Activated T-helper 2 cell treated with anti-CD3 and anti-CD28 coated beads, Interferon-gamma antibody, Interleukin-2, Interleukin-4, amounts not matched to agents 10 μg/mL and 5 μg/mL and 100 μg/mL, durations not matched to agents 14 hours and 24 hours and 36 hours (primary cell): ENCODE measurements at regions of chr2 and their contacts with region 1.

Region 1: GRCh38 chr2:197869501-197870111 is 65.2 kb downstream of the PLCL1 start:
- DNase-seq: peak; percentile 38
- H3K4me3 Mint-ChIP-seq: peak overlapping the region; percentile 54
- H3K27ac Mint-ChIP-seq: peak overlapping the region; percentile 84
- H3K4me1 Mint-ChIP-seq: peaks cover 51% of the 10 kb centered on the region
- H3K27me3 Mint-ChIP-seq: no peaks in the 10 kb centered on the region

Region 2: GRCh38 chr2:197502201-197502600 is 367.4 kb before region 1 on chr2:
- intact Hi-C with region 1: no loop called
- DNase-seq: no peak
- H3K4me3 Mint-ChIP-seq: peak overlapping the region; percentile 94
- H3K27ac Mint-ChIP-seq: peak overlapping the region; percentile 9
- H3K4me1 Mint-ChIP-seq: peaks cover 25% of the 10 kb centered on the region
- H3K27me3 Mint-ChIP-seq: no peaks in the 10 kb centered on the region

Region 3: DNA sequence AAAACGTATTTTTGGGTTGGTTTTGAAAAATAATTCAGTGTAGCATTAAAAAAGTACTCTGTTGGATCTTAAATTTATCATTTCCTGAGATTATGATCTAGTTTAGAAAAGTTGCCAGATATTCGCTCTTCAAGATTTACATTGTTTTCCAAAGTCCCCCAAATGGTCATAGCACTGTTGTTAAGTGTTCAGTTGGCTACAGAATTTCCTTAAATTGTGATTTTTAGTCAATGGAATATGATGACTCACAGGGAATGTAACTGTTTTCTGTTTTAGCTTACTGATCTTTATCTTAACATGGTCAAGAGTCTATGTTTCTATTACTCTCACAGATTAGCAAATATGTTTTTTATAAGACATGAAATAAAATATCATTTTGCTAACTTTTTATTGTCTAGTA is 42.0 kb before region 1 on chr2:
- intact Hi-C with region 1: no loop called
- DNase-seq: no peak
- H3K4me3 Mint-ChIP-seq: no peak overlapping the region
- H3K27ac Mint-ChIP-seq: no peak overlapping the region
- H3K4me1 Mint-ChIP-seq: peaks cover 3% of the 10 kb centered on the region
- H3K27me3 Mint-ChIP-seq: no peaks in the 10 kb centered on the region

Region 4: DNA sequence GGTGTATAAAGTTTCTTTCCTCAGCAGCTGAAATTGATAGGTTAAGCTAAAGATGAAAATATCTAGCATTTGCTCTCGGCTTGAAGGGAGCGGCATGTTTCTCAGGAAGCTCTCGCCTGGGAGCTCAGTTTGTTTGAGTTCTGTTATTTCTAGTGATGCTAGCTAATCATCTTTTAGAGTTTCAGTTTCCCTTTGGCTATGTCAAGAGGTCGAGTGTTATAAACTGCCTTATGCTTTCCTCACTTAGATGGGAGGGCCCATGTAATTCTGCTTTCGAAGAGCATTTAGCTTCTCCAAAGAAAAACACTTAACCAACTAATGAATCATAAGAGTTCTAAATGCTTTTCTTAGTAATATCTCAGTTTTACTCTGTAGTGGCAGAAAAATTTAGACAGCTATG is 31.6 kb before region 1 on chr2:
- intact Hi-C with region 1: loop called (anchors 1 kb)
- DNase-seq: no peak
- H3K4me3 Mint-ChIP-seq: peak overlapping the region; percentile 53
- H3K27ac Mint-ChIP-seq: peak overlapping the region; percentile 68
- H3K4me1 Mint-ChIP-seq: peaks cover 44% of the 10 kb centered on the region
- H3K27me3 Mint-ChIP-seq: peaks cover 4% of the 10 kb centered on the region

Region 5: GRCh38 chr2:197904446-197904845 is 34.8 kb after region 1 on chr2:
- intact Hi-C with region 1: loop called (anchors 1 kb)
- DNase-seq: no peak
- H3K4me3 Mint-ChIP-seq: no peak overlapping the region
- H3K27ac Mint-ChIP-seq: no peak overlapping the region
- H3K4me1 Mint-ChIP-seq: peaks cover 4% of the 10 kb centered on the region
- H3K27me3 Mint-ChIP-seq: peaks cover 63% of the 10 kb centered on the region

Region 6: DNA sequence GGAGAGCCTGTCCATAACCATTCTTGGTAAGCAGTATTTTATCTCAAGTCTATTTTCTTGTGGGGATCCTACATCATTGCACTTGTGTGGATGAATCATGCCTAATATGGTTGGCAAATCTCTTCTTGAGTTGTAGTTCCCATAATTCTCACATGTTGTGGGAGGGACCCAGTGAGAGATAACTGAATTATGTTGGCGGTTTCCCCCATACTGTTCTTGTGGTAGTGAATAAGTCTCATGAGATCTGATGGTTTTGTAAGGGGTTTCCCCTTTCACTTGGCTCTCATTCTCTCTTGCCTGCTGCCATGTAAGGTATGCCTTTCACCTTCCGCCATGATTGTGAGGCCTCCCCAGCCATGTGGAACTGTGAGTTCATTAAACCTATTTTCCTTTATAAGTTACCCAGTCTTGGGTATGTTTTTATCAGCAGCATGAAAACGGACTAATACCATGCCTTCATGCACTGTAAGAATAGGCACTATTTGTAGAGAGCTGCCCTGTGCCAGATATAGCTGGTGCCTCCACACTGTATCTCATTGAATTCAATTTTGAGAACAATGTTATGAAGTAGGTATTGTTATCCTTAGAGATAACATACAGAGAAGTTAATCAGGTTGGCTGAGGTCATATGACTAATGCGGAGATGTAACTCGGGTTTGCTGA is 83.1 kb after region 1 on chr2:
- intact Hi-C with region 1: loop called (anchors 2 kb)
- DNase-seq: no peak
- H3K4me3 Mint-ChIP-seq: no peak overlapping the region
- H3K27ac Mint-ChIP-seq: no peak overlapping the region
- H3K4me1 Mint-ChIP-seq: peaks cover 20% of the 10 kb centered on the region
- H3K27me3 Mint-ChIP-seq: peaks cover 7% of the 10 kb centered on the region

Region 7: GRCh38 chr2:198042189-198042588 is 172.6 kb after region 1 on chr2:
- intact Hi-C with region 1: loop called (anchors 2 kb)
- DNase-seq: no peak
- H3K4me3 Mint-ChIP-seq: no peak overlapping the region
- H3K27ac Mint-ChIP-seq: no peak overlapping the region
- H3K4me1 Mint-ChIP-seq: peaks cover 19% of the 10 kb centered on the region
- H3K27me3 Mint-ChIP-seq: no peaks in the 10 kb centered on the region